Naive thymus-derived CD4-positive, alpha-beta T cell (primary cell): ENCODE measurements at regions of chr1 and their contacts with region 1.

Region 1: DNA sequence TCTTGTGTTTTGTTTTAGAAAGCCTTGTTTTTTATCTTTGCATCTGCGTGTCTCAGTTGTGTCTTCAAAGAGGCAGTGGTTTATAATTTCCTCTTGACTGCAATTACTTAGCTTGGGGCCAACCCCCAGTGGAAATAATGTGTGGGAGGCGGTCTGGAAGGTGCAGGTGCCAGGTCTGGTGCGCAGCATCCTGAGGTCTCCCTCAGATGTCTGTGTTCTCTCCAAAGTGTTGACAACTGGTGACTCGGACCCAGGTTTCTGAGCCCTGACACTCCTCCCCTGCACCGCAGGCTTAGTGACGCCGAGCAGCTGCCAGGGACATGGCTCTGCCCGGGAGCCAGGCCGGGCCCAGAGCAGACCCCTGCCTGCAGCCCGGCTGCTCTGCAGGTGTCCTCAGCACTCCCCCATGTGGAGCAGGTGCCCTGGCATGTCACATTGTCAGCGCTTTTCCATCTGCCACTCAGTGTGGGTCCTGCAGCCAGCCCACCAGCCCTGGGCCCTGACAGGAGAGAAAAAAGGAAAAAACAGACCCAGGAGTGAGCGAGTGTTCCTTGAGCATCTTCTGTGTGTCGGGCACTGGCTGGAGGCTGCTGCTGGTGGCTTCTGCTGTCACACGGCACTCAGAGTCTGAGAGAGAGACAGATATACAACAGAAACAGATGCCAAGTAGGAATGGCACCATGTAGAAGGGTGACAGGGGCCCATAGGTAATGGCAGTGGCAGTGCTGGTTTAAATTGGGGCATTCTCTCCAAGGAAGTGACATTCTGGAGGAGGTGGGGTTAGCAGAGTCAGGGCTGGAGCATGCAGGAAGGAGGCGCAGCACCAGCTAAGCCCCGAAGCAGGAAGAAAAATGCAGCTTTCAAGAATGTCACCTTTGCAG is 24.8 kb upstream of the SELENON start:
- DNase-seq: peak; percentile 53 to 97 (median 95)
- ATAC-seq: peak; percentile 92
- H3K4me3 ChIP-seq: peak overlapping the region; percentile 49
- H3K4me3 Mint-ChIP-seq: peak overlapping the region; percentile 71 to 91 (median 84)
- H3K27ac ChIP-seq: peak overlapping the region; percentile 77
- H3K27ac Mint-ChIP-seq: peak overlapping the region; percentile 79 to 99 (median 97)
- H3K4me1 ChIP-seq: peaks cover 35 to 78% of the 10 kb centered on the region in 2 donors
- H3K4me1 Mint-ChIP-seq: peaks cover 52 to 96% (median 86%) of the 10 kb centered on the region in 7 donors
- H3K27me3 ChIP-seq: no peaks in the 10 kb centered on the region
- H3K27me3 Mint-ChIP-seq: peaks cover 0 to 45% (median 0%) of the 10 kb centered on the region in 5 donors

Region 2: DNA sequence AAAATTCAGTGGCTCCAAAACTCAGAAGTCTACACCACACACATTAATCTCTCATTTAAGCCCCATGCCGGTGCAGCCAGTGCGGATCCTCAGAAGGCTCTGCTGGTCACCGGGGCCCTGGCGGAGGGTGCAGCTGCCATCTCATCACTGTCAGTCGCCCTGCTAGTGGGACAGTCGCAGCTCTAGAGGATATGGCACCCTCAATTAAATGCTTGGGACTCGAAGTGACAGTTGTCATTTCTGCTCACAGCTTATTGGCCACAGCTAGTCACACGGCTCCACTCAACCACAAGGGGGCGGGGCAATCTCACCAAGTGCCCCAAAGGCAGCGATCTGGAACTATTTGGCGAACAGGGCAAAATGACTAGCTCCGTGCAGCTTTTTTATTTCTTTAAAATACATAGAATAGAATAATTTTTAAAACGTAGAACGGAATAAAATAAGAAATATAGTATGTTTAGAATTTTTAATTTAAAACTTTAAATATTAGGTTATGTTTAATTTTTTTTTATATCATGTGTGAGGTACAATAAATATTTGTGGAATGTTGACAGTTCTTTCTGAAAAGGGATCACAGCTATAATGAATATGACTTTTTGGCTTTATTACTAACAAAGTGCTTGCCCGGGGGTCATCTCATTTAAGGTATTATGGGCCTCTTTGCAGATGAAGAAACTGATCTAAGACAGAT is 166.5 kb before region 1 on chr1:
- CTCF ChIA-PET with region 1: no interaction called
- POLR2A ChIA-PET with region 1: interaction called, 9 read pairs
- intact Hi-C with region 1: loop called in 1 of 2 experiments (anchors 1 kb)
- DNase-seq: peak; percentile 69 to 87 (median 85)
- ATAC-seq: peak; percentile 100
- H3K4me3 ChIP-seq: no peak overlapping the region
- H3K4me3 Mint-ChIP-seq: peak overlapping the region; percentile 1 to 78 (median 47)
- H3K27ac ChIP-seq: peak overlapping the region; percentile 9
- H3K27ac Mint-ChIP-seq: peak overlapping the region in 6 of 9 donors; percentile 15 to 71 (median 52)
- H3K4me1 ChIP-seq: peaks cover 0 to 4% of the 10 kb centered on the region in 2 donors
- H3K4me1 Mint-ChIP-seq: peaks cover 7 to 28% (median 21%) of the 10 kb centered on the region in 7 donors
- H3K27me3 ChIP-seq: peaks cover 0 to 6% of the 10 kb centered on the region in 2 donors
- H3K27me3 Mint-ChIP-seq: peaks cover 0 to 79% (median 0%) of the 10 kb centered on the region in 5 donors

Region 3: DNA sequence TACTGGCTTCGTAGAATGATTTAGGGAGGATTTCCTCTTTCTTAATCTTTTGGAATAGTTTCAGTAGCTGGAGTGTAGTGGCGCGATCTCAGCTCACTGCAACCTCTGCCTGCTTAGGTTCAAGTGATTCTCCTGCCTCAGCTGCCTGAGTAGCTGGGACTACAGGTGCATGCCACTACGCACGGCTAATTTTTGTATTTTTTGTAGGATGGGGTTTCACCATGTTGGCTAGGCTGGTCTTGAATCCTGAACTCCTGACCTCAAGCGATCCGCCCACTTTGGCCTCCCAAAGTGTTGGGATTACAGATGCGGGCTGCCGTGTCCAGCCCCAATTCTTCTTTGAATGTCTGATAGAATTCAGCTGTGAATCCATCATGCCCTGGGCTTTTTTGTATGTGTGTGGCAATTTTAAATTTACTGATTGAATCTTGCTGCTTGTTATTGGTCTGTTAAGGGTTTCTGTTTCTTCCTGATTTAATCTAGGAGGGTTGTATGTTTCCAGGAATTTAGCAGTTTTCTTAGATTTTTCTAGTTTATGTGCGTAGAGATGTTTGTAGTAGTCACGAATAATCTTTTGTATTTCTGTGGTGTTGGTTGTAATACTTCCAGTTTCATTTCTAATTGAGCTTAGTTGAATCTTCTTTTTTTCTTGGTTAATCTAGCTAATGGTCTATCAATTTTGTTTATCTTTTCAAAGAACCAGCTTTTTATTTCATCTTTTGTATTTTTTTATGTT is 143.2 kb before region 1 on chr1:
- CTCF ChIA-PET with region 1: no interaction called
- POLR2A ChIA-PET with region 1: interaction called, 14 read pairs
- intact Hi-C with region 1: no loop called
- DNase-seq: peak in 4 of 9 donors; percentile 3 to 35 (median 25)
- ATAC-seq: peak; percentile 44
- H3K4me3 ChIP-seq: peak overlapping the region; percentile 51
- H3K4me3 Mint-ChIP-seq: peak overlapping the region; percentile 63 to 96 (median 84)
- H3K27ac ChIP-seq: peak overlapping the region; percentile 86
- H3K27ac Mint-ChIP-seq: peak overlapping the region; percentile 79 to 100 (median 97)
- H3K4me1 ChIP-seq: peaks cover 6 to 48% of the 10 kb centered on the region in 2 donors
- H3K4me1 Mint-ChIP-seq: peaks cover 55 to 91% (median 82%) of the 10 kb centered on the region in 7 donors
- H3K27me3 ChIP-seq: no peaks in the 10 kb centered on the region
- H3K27me3 Mint-ChIP-seq: peaks cover 0 to 44% (median 0%) of the 10 kb centered on the region in 5 donors

Region 4: DNA sequence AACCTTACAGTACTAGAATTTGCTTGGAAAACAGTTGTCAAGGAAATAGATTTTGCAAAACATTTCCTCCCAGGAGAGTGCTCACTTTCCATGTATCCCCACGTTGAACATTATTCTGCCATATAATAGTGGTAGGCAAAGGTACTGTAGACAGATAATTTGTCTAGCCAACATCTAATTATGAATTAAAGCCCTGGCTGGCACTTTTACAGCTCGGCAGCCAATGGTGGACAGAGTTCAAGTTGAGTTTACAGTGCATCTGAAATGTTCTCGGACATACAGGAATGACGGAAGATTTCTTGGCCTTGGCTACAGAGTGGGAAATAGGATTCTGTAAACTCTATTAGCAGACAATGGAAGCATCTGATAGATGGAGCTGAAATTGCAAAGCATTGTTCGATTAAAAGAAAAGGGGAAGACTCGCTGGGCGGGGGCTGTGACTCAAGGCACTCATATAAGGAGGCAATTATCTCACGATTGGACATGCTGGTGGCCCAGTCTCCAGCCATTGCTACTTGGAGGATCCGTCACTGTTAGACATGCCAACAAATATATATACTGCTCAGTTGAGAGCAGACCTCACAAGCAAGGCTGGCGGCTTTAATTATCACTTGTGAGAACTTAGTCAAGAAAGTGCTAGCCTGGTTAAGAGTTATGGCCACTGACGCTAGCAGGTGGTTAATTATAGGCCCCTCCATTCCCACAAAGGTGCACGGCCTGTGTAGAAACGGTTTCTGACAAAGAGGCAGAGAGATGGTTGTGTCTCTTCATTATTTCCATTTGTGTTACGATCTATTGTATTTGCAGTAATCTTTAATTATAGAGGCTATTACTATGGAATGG is 110.6 kb before region 1 on chr1:
- CTCF ChIA-PET with region 1: no interaction called
- POLR2A ChIA-PET with region 1: interaction called, 14 read pairs
- intact Hi-C with region 1: no loop called
- DNase-seq: no peak
- ATAC-seq: no peak
- H3K4me3 ChIP-seq: no peak overlapping the region
- H3K4me3 Mint-ChIP-seq: no peak overlapping the region
- H3K27ac ChIP-seq: peak overlapping the region; percentile 39
- H3K27ac Mint-ChIP-seq: peak overlapping the region in 8 of 9 donors; percentile 43 to 98 (median 96)
- H3K4me1 ChIP-seq: peaks cover 0 to 41% of the 10 kb centered on the region in 2 donors
- H3K4me1 Mint-ChIP-seq: peaks cover 23 to 89% (median 85%) of the 10 kb centered on the region in 7 donors
- H3K27me3 ChIP-seq: no peaks in the 10 kb centered on the region
- H3K27me3 Mint-ChIP-seq: peaks cover 0 to 69% (median 0%) of the 10 kb centered on the region in 5 donors

Region 5: GRCh38 chr1:25695090-25695770 is 79.9 kb before region 1 on chr1:
- CTCF ChIA-PET with region 1: interaction called, 5 read pairs
- POLR2A ChIA-PET with region 1: interaction called, 11 read pairs
- intact Hi-C with region 1: loop called in 1 of 2 experiments (anchors 2 kb)
- DNase-seq: no peak
- ATAC-seq: no peak
- H3K4me3 ChIP-seq: no peak overlapping the region
- H3K4me3 Mint-ChIP-seq: peak overlapping the region in 6 of 10 donors; percentile 1 to 69 (median 38)
- H3K27ac ChIP-seq: no peak overlapping the region
- H3K27ac Mint-ChIP-seq: peak overlapping the region in 8 of 9 donors; percentile 65 to 89 (median 74)
- H3K4me1 ChIP-seq: peaks cover 0 to 63% of the 10 kb centered on the region in 2 donors
- H3K4me1 Mint-ChIP-seq: peaks cover 29 to 88% (median 70%) of the 10 kb centered on the region in 7 donors
- H3K27me3 ChIP-seq: no peaks in the 10 kb centered on the region
- H3K27me3 Mint-ChIP-seq: peaks cover 0 to 53% (median 0%) of the 10 kb centered on the region in 5 donors

Region 6: DNA sequence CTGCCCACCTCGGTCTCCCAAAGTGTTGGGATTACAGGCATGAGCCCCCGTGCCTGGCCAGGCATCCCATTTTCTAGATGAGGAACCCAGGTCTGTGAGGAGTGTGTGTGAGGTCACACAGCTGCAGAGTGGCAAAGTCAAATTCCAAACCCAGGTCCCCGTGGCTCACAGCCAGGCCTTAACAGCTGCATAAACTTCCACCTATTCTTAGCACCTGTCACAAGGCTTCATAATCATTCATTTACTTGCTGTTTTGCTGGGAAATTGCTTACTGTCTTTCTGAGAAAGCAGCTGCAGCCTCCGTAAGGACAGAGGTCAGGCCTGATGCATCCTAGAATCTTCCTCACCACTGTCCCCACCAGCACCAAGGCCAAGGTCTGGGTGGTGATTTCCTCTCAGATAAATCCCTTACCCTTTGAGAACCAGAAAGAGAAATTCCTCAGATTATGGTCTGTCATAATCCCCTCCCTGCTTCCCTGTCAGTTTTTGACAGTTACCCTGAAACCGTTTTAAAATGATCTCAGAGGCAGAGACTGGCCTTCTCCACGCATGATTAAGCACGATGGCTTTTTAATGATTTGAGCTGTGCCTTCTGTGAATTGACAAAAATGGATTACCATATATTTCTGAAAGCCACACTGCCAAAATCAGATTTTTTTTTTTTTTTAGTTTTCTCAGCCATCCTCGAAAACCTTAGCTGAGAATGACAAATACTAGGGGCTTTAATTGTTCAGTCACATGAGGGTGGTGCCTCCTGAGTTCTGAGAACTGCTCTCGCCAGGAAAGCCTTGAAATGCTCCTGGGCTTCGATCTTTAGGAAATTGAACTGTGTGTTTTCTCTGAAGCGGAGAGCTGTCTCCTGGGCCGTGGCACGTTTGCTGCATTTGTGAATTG is 45.2 kb before region 1 on chr1:
- CTCF ChIA-PET with region 1: no interaction called
- POLR2A ChIA-PET with region 1: interaction called, 3 read pairs
- intact Hi-C with region 1: loop called in 1 of 2 experiments (anchors 2 kb)
- DNase-seq: no peak
- ATAC-seq: no peak
- H3K4me3 ChIP-seq: no peak overlapping the region
- H3K4me3 Mint-ChIP-seq: peak overlapping the region; percentile 51 to 75 (median 62)
- H3K27ac ChIP-seq: peak overlapping the region; percentile 1
- H3K27ac Mint-ChIP-seq: peak overlapping the region in 8 of 9 donors; percentile 64 to 86 (median 76)
- H3K4me1 ChIP-seq: peaks cover 15 to 55% of the 10 kb centered on the region in 2 donors
- H3K4me1 Mint-ChIP-seq: peaks cover 27 to 96% (median 87%) of the 10 kb centered on the region in 7 donors
- H3K27me3 ChIP-seq: no peaks in the 10 kb centered on the region
- H3K27me3 Mint-ChIP-seq: peaks cover 0 to 54% (median 0%) of the 10 kb centered on the region in 5 donors

Region 7: GRCh38 chr1:25796811-25797458 is 21.8 kb after region 1 on chr1:
- CTCF ChIA-PET with region 1: interaction called, 13 read pairs
- POLR2A ChIA-PET with region 1: interaction called, 19 read pairs
- intact Hi-C with region 1: loop called in 1 of 2 experiments (anchors 1 kb)
- DNase-seq: peak; percentile 71 to 89 (median 86)
- ATAC-seq: peak; percentile 76
- H3K4me3 ChIP-seq: peak overlapping the region; percentile 15
- H3K4me3 Mint-ChIP-seq: peak overlapping the region; percentile 58 to 94 (median 81)
- H3K27ac ChIP-seq: peak overlapping the region; percentile 37
- H3K27ac Mint-ChIP-seq: peak overlapping the region; percentile 51 to 98 (median 93)
- H3K4me1 ChIP-seq: peaks cover 32 to 67% of the 10 kb centered on the region in 2 donors
- H3K4me1 Mint-ChIP-seq: peaks cover 30 to 88% (median 74%) of the 10 kb centered on the region in 7 donors
- H3K27me3 ChIP-seq: no peaks in the 10 kb centered on the region
- H3K27me3 Mint-ChIP-seq: peaks cover 0 to 29% (median 0%) of the 10 kb centered on the region in 5 donors

Region 8: GRCh38 chr1:26431979-26432695 is 657.0 kb after region 1 on chr1 and contains the start of gene DHDDS:
- CTCF ChIA-PET with region 1: no interaction called
- POLR2A ChIA-PET with region 1: no interaction called
- intact Hi-C with region 1: no loop called
- DNase-seq: peak; percentile 95 to 98 (median 97)
- ATAC-seq: peak; percentile 99
- H3K4me3 ChIP-seq: peak within 1 kb of the TSS; percentile 88
- H3K4me3 Mint-ChIP-seq: peak within 1 kb of the TSS; percentile 92 to 99 (median 96)
- H3K27ac ChIP-seq: peak within 1 kb of the TSS; percentile 76
- H3K27ac Mint-ChIP-seq: peak within 1 kb of the TSS; percentile 90 to 99 (median 93)
- H3K4me1 ChIP-seq: peaks cover 11 to 15% of the 10 kb centered on the region in 2 donors
- H3K4me1 Mint-ChIP-seq: peaks cover 14 to 26% (median 22%) of the 10 kb centered on the region in 7 donors
- H3K27me3 ChIP-seq: no peaks in the 10 kb centered on the region
- H3K27me3 Mint-ChIP-seq: peaks cover 0 to 15% (median 0%) of the 10 kb centered on the region in 5 donors
- total RNA-seq, gene DHDDS: 28.1 to 58.9 (median 37.7) TPM